T-cell (primary cell): ENCODE measurements at regions of chr17 and their contacts with region 1.

Region 1: GRCh38 chr17:73311781-73312641 is at the start of gene CDC42EP4:
- DNase-seq: peak; percentile 60 to 88 (median 76)
- ATAC-seq: peak; percentile 91 to 95 (median 94)
- H3K4me3 ChIP-seq: peak within 1 kb of the TSS; percentile 60 to 95
- H3K4me3 Mint-ChIP-seq: peak within 1 kb of the TSS; percentile 83 to 87 (median 85)
- H3K27ac ChIP-seq: peak within 1 kb of the TSS; percentile 61
- H3K27ac Mint-ChIP-seq: peak within 1 kb of the TSS in 1 of 2 donors; percentile 34
- H3K4me1 ChIP-seq: peaks cover 7 to 26% of the 10 kb centered on the region in 2 experiments
- H3K4me1 Mint-ChIP-seq: peaks cover 13 to 16% (median 14%) of the 10 kb centered on the region in 3 donors
- H3K27me3 ChIP-seq: peaks cover 0 to 34% of the 10 kb centered on the region in 2 experiments
- H3K27me3 Mint-ChIP-seq: no peaks in the 10 kb centered on the region
- total RNA-seq, gene CDC42EP4: 1.1 to 3.7 (median 1.3) TPM

Region 2: GRCh38 chr17:73182616-73183310 is 129.2 kb before region 1 on chr17:
- CTCF ChIA-PET with region 1: no interaction called
- POLR2A ChIA-PET with region 1: no interaction called
- DNase-seq: no peak
- ATAC-seq: no peak
- H3K4me3 ChIP-seq: no peak overlapping the region
- H3K4me3 Mint-ChIP-seq: no peak overlapping the region
- H3K27ac ChIP-seq: no peak overlapping the region
- H3K27ac Mint-ChIP-seq: no peak overlapping the region
- H3K4me1 ChIP-seq: no peaks in the 10 kb centered on the region
- H3K4me1 Mint-ChIP-seq: no peaks in the 10 kb centered on the region
- H3K27me3 ChIP-seq: no peaks in the 10 kb centered on the region
- H3K27me3 Mint-ChIP-seq: no peaks in the 10 kb centered on the region

Region 3: GRCh38 chr17:73203135-73203787 is 108.8 kb before region 1 on chr17:
- CTCF ChIA-PET with region 1: interaction called in 1 of 2 experiments, 15 read pairs
- POLR2A ChIA-PET with region 1: no interaction called
- DNase-seq: peak in 2 of 35 experiments; percentile 5 to 37
- ATAC-seq: peak; percentile 62 to 75 (median 65)
- H3K4me3 ChIP-seq: no peak overlapping the region
- H3K4me3 Mint-ChIP-seq: peak overlapping the region in 2 of 3 donors; percentile 14 to 51
- H3K27ac ChIP-seq: peak overlapping the region; percentile 50
- H3K27ac Mint-ChIP-seq: peak overlapping the region; percentile 89 to 91
- H3K4me1 ChIP-seq: peaks cover 11 to 20% of the 10 kb centered on the region in 2 experiments
- H3K4me1 Mint-ChIP-seq: peaks cover 29 to 36% (median 29%) of the 10 kb centered on the region in 3 donors
- H3K27me3 ChIP-seq: no peaks in the 10 kb centered on the region
- H3K27me3 Mint-ChIP-seq: no peaks in the 10 kb centered on the region

Region 4: GRCh38 chr17:73379826-73380225 is 67.8 kb after region 1 on chr17:
- CTCF ChIA-PET with region 1: no interaction called
- POLR2A ChIA-PET with region 1: interaction called in 1 of 2 experiments, 10 read pairs
- DNase-seq: no peak
- ATAC-seq: no peak
- H3K4me3 ChIP-seq: no peak overlapping the region
- H3K4me3 Mint-ChIP-seq: no peak overlapping the region
- H3K27ac ChIP-seq: no peak overlapping the region
- H3K27ac Mint-ChIP-seq: no peak overlapping the region
- H3K4me1 ChIP-seq: no peaks in the 10 kb centered on the region
- H3K4me1 Mint-ChIP-seq: no peaks in the 10 kb centered on the region
- H3K27me3 ChIP-seq: peaks cover 0 to 10% of the 10 kb centered on the region in 2 experiments
- H3K27me3 Mint-ChIP-seq: no peaks in the 10 kb centered on the region